ENCODE measurements at regions of chr6 and their contacts with region 1.

Region 1: GRCh38 chr6:143099647-143100046 is 39.0 kb downstream of the AIG1 start:
- DNase-seq: no peak
- H3K4me3 ChIP-seq: no peak overlapping the region
- H3K27ac ChIP-seq: no peak overlapping the region
- H3K4me1 ChIP-seq: peaks cover 2% of the 10 kb centered on the region
- H3K27me3 ChIP-seq: no peaks in the 10 kb centered on the region
- CTCF ChIP-seq: no peak
- EP300 ChIP-seq: no peak
- POLR2A ChIP-seq: no peak

Region 2: GRCh38 chr6:143110572-143110971 is 10.9 kb after region 1 on chr6:
- intact Hi-C with region 1: loop called in 1 of 4 experiments (anchors 1 kb)
- DNase-seq: no peak
- H3K4me3 ChIP-seq: no peak overlapping the region
- H3K27ac ChIP-seq: no peak overlapping the region
- H3K4me1 ChIP-seq: no peaks in the 10 kb centered on the region
- H3K27me3 ChIP-seq: no peaks in the 10 kb centered on the region
- CTCF ChIP-seq: no peak
- EP300 ChIP-seq: no peak
- POLR2A ChIP-seq: no peak

Measured in ovary (tissue), 10 donors.